ENCODE measurements at regions of chr2 and their contacts with region 1.

Region 1: GRCh38 chr2:195533771-195534642 is 123.0 kb upstream of the SLC39A10 start:
- DNase-seq: peak; percentile 76
- H3K4me3 Mint-ChIP-seq: peak overlapping the region; percentile 90
- H3K27ac Mint-ChIP-seq: peak overlapping the region; percentile 99
- H3K4me1 Mint-ChIP-seq: peaks cover 90% of the 10 kb centered on the region
- H3K27me3 Mint-ChIP-seq: no peaks in the 10 kb centered on the region

Region 2: DNA sequence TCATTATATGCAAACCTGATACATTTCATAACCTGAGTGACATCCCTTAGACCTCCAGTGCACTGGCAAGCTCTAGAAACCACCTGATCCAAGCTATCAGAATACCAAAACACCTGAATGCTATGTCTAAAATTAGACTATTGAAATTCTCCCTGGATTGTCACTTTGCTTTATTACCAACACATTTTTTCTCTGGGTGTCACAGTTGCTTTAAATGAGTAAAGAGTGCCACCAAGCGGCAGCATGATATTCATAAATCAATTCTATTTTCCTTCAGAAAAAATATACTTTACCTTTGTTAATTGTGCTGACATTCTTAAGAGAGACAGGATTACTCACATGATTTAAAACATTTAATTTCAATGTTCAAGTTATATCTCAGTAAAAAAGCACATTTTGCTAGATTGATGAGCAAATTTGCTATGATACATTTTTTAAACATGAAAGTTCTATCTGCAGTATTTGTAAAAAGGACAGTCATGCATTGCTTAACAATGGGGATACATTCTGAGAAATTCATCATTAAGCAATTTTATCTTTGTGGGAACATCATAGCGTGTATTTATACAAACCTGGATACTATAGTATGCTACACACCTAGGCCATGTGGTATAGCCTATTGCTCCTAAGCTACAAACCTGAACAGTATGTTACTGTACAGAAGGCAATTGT is 215.4 kb before region 1 on chr2:
- CTCF ChIA-PET with region 1: interaction called, 18 read pairs
- DNase-seq: peak; percentile 63
- H3K4me3 Mint-ChIP-seq: no peak overlapping the region
- H3K27ac Mint-ChIP-seq: no peak overlapping the region
- H3K4me1 Mint-ChIP-seq: peaks cover 22% of the 10 kb centered on the region
- H3K27me3 Mint-ChIP-seq: no peaks in the 10 kb centered on the region

Region 3: GRCh38 chr2:195498176-195498575 is 35.8 kb before region 1 on chr2:
- CTCF ChIA-PET with region 1: interaction called, 16 read pairs
- DNase-seq: peak; percentile 63
- H3K4me3 Mint-ChIP-seq: no peak overlapping the region
- H3K27ac Mint-ChIP-seq: peak overlapping the region; percentile 5
- H3K4me1 Mint-ChIP-seq: peaks cover 46% of the 10 kb centered on the region
- H3K27me3 Mint-ChIP-seq: no peaks in the 10 kb centered on the region

Region 4: DNA sequence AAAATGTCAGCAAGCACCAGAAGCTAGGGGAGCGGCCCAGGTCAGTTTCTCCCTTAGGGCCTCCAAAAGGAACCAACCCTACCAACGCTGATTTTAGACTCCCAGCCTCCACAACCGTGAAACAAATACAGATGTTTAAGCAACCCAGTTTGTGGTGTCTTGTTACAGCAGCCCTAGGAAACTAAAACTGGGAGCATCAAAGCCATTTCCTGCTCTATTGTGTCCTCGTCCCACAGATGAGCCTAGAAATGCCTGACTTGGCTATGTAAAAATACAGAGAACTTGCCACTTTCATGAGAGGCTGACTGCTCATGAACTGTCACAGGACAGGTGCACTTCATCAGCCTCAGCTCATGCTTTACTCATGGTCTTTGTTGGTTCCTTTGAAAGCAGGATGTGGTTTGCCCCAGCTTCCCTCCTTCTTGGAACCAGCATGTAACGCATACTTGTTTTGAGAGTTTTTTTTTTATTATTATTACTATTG is 25.5 kb after region 1 on chr2:
- CTCF ChIA-PET with region 1: interaction called, 24 read pairs
- DNase-seq: peak; percentile 91
- H3K4me3 Mint-ChIP-seq: peak overlapping the region; percentile 44
- H3K27ac Mint-ChIP-seq: peak overlapping the region; percentile 97
- H3K4me1 Mint-ChIP-seq: peaks cover 77% of the 10 kb centered on the region
- H3K27me3 Mint-ChIP-seq: no peaks in the 10 kb centered on the region

Region 5: GRCh38 chr2:195575879-195576401 is 41.9 kb after region 1 on chr2:
- CTCF ChIA-PET with region 1: interaction called, 17 read pairs
- DNase-seq: no peak
- H3K4me3 Mint-ChIP-seq: peak overlapping the region; percentile 31
- H3K27ac Mint-ChIP-seq: peak overlapping the region; percentile 77
- H3K4me1 Mint-ChIP-seq: peaks cover 75% of the 10 kb centered on the region
- H3K27me3 Mint-ChIP-seq: no peaks in the 10 kb centered on the region

Region 6: GRCh38 chr2:195656859-195657633 is 123.0 kb after region 1 on chr2 and contains the start of gene SLC39A10:
- CTCF ChIA-PET with region 1: interaction called, 54 read pairs
- DNase-seq: peak; percentile 97
- H3K4me3 Mint-ChIP-seq: peak within 1 kb of the TSS; percentile 98
- H3K27ac Mint-ChIP-seq: peak within 1 kb of the TSS; percentile 100
- H3K4me1 Mint-ChIP-seq: peaks cover 21% of the 10 kb centered on the region
- H3K27me3 Mint-ChIP-seq: peaks cover 13% of the 10 kb centered on the region

Region 7: GRCh38 chr2:196143730-196144131 is 609.7 kb after region 1 on chr2:
- CTCF ChIA-PET with region 1: no interaction called
- DNase-seq: no peak
- H3K4me3 Mint-ChIP-seq: peak overlapping the region; percentile 10
- H3K27ac Mint-ChIP-seq: peak overlapping the region; percentile 74
- H3K4me1 Mint-ChIP-seq: peaks cover 69% of the 10 kb centered on the region
- H3K27me3 Mint-ChIP-seq: no peaks in the 10 kb centered on the region

Measured in activated naive CD4-positive, alpha-beta T cell treated with anti-CD3 and anti-CD28 coated beads, Interleukin-2, amount 10 ng/mL, durations not matched to agents 7 days and 5 days (primary cell).